AG04450 (cell line): ENCODE measurements at regions of chr5 and their contacts with region 1.

Region 1: GRCh38 chr5:151825445-151825844 is 53.7 kb downstream of the G3BP1 start:
- DNase-seq: peak; percentile 42
- H3K4me3 ChIP-seq: no peak overlapping the region
- H3K27ac ChIP-seq: no peak overlapping the region
- H3K27me3 ChIP-seq: no peaks in the 10 kb centered on the region
- CTCF ChIP-seq: peak; percentile 93

Region 2: DNA sequence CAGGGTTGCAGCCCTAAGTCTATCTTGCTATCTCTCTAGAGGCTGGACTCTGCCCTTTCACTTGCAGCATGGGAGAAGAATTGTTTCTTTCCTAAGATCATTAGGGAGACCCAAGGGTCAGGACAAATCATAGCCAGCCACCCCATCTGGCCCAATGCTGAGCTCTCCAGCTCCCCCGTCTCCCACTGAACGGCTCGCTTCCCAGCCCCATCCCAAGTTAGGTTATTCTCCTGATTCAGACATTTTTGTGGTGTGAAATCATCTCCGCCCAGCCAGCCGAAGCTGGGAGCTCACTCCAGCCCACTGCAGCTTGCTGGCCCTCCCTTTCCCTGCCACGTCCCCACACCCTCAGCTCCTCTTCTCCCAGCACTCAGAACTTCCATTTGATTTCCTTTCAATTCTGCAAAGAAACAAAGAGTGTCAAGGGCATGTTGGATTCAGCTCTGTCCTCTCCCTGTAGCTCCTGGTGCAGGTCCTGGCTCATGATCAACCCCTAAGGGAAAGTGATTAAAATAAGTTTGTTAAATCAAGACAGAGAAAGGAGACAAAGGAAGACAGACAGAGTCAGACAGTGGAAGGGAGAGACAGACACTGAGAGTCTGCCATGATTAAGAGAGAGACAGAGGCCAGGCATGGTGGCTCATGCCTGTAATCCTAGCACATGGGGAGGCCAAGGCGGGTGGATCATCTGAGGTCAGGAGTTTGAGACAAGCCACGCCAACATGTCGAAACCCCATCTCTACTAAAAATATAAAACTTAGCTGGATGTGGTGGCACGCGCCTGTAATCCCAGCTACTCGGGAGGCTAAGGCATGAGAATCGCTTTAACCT is 126.2 kb before region 1 on chr5:
- CTCF ChIA-PET with region 1: no interaction called
- POLR2A ChIA-PET with region 1: no interaction called
- DNase-seq: peak; percentile 97
- H3K4me3 ChIP-seq: no peak overlapping the region
- H3K27ac ChIP-seq: peak overlapping the region; percentile 100
- H3K27me3 ChIP-seq: no peaks in the 10 kb centered on the region
- CTCF ChIP-seq: no peak

Region 3: GRCh38 chr5:151800532-151800931 is 24.9 kb before region 1 on chr5:
- CTCF ChIA-PET with region 1: interaction called, 12 read pairs
- POLR2A ChIA-PET with region 1: no interaction called
- DNase-seq: no peak
- H3K4me3 ChIP-seq: no peak overlapping the region
- H3K27ac ChIP-seq: no peak overlapping the region
- H3K27me3 ChIP-seq: no peaks in the 10 kb centered on the region
- CTCF ChIP-seq: no peak

Region 4: GRCh38 chr5:151811593-151812321 is 13.7 kb before region 1 on chr5:
- CTCF ChIA-PET with region 1: interaction called, 40 read pairs
- POLR2A ChIA-PET with region 1: interaction called, 6 read pairs
- DNase-seq: no peak
- H3K4me3 ChIP-seq: no peak overlapping the region
- H3K27ac ChIP-seq: no peak overlapping the region
- H3K27me3 ChIP-seq: no peaks in the 10 kb centered on the region
- CTCF ChIP-seq: no peak

Region 5: DNA sequence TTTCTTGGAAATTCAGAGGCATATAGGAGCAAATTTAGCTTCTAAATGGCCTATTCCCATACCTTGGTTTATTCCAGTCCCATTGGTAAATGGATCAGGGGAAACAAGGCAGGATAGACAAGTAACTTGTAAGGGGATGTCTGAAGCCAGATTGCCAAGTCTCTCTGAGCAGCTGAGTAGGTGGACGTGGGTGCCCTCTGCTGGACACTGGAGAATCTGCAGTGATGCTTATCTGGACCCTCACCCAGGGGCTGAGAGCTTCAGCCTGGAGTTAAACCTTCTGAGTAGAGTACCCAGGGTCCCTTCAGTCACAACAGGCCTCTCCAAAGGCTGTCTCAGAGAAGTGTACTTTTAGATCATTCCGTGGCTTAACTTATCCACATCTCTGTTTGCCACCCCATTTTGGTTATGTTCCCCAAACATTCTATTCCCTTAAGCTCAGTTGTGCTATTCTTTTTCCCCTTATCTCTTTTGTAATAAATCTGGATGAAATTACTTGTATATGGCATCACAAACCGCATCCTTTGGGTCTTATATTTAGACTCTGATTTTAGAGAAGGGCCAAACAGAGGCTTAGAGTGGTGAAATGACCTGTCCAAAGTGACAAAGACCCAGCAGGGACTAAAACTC is 317.5 kb after region 1 on chr5:
- CTCF ChIA-PET with region 1: interaction called, 373 read pairs
- POLR2A ChIA-PET with region 1: interaction called, 4 read pairs
- DNase-seq: peak; percentile 24
- H3K4me3 ChIP-seq: no peak overlapping the region
- H3K27ac ChIP-seq: no peak overlapping the region
- H3K27me3 ChIP-seq: no peaks in the 10 kb centered on the region
- CTCF ChIP-seq: peak; percentile 90

Region 6: DNA sequence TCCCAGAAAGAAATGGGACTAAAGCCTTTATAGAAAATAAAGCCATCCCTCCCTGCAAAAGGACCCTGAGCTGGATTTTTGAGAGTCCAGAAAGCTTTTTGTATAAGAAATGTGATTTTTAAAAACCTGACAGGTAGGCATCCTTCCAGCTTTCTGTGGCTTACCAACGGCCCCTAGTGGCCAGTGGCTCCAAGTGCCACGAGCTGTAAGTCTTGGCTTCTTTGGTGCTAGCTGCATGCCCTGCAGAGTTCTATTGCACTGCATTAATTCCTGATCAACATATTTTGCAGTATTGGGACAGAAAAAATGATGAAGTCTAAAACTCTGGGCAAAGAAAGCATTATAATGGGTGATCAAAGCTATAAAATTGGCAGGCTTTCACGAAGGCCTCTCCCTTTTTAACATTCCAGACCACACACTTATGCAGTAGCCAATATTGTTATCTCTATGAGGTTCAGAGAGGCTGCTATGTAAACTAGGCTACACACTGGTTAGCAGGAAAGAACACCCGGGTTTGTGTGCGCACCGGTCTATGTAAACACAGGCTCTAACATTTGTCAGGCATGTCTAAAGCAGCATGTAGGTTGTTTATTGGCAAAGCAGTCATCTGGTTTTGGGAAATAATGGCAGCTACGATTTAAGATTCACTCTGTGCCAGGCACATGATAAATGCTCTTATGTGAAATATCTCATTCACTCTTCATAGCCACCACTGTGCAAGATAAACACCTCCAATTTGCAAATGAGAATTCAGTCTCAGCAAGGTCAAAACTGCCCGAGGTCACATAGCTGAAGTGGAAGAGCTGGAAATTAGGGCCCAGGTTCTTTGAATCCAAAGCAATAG is 524.5 kb after region 1 on chr5:
- CTCF ChIA-PET with region 1: interaction called, 16 read pairs
- POLR2A ChIA-PET with region 1: no interaction called
- DNase-seq: no peak
- H3K4me3 ChIP-seq: no peak overlapping the region
- H3K27ac ChIP-seq: no peak overlapping the region
- H3K27me3 ChIP-seq: no peaks in the 10 kb centered on the region
- CTCF ChIP-seq: peak; percentile 74

Region 7: GRCh38 chr5:152514827-152515397 is 689.5 kb after region 1 on chr5:
- CTCF ChIA-PET with region 1: interaction called, 15 read pairs
- POLR2A ChIA-PET with region 1: no interaction called
- DNase-seq: no peak
- H3K4me3 ChIP-seq: no peak overlapping the region
- H3K27ac ChIP-seq: no peak overlapping the region
- H3K27me3 ChIP-seq: no peaks in the 10 kb centered on the region
- CTCF ChIP-seq: peak; percentile 51